ENCODE measurements at regions of chr11 and their contacts with region 1.

Region 1: GRCh38 chr11:61516675-61517572 is 8.4 kb downstream of the LRRC10B start:
- DNase-seq: peak; percentile 65
- ATAC-seq: peak; percentile 66
- H3K4me3 Mint-ChIP-seq: no peak overlapping the region
- H3K27ac Mint-ChIP-seq: no peak overlapping the region
- H3K4me1 Mint-ChIP-seq: peaks cover 4% of the 10 kb centered on the region
- H3K27me3 Mint-ChIP-seq: no peaks in the 10 kb centered on the region

Region 2: GRCh38 chr11:61429691-61430582 is 87.0 kb before region 1 on chr11 and contains the starts of genes CPSF7 and SDHAF2:
- CTCF ChIA-PET with region 1: interaction called, 17 read pairs
- POLR2A ChIA-PET with region 1: no interaction called
- DNase-seq: peak; percentile 98
- ATAC-seq: peak; percentile 93
- H3K4me3 Mint-ChIP-seq: peak within 1 kb of the TSS; percentile 99
- H3K27ac Mint-ChIP-seq: peak within 1 kb of the TSS; percentile 100
- H3K4me1 Mint-ChIP-seq: peaks cover 56% of the 10 kb centered on the region
- H3K27me3 Mint-ChIP-seq: no peaks in the 10 kb centered on the region
- total RNA-seq, gene CPSF7: 94.8 to 98.4 TPM
- total RNA-seq, gene SDHAF2: 51.6 to 54.3 TPM

Region 3: DNA sequence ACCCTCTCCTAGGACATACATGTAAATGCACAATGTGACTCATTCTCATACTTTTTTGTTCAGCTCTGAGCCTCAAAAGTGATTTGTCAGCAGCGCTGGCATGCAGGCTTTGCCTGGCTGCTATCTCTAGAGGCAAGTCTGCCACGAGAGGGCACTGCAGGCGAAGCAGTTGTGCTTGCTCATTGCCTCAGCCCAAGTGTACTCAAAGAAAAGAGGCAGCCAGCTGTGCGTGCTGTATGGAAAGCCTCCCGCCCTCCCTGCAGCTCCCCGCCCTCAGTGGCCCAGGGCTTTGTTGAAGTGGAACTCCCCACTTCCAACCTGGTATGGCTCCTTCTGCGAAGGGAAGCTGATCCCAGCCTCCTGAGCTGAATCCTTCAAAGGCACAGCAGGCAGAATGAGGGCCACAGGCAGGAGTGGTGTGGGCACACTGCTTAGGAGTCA is 70.7 kb before region 1 on chr11:
- CTCF ChIA-PET with region 1: interaction called, 79 read pairs
- POLR2A ChIA-PET with region 1: no interaction called
- DNase-seq: peak; percentile 83
- ATAC-seq: peak; percentile 93
- H3K4me3 Mint-ChIP-seq: no peak overlapping the region
- H3K27ac Mint-ChIP-seq: no peak overlapping the region
- H3K4me1 Mint-ChIP-seq: peaks cover 2% of the 10 kb centered on the region
- H3K27me3 Mint-ChIP-seq: no peaks in the 10 kb centered on the region

Region 4: GRCh38 chr11:61477727-61478148 is 39.2 kb before region 1 on chr11:
- CTCF ChIA-PET with region 1: interaction called, 115 read pairs
- POLR2A ChIA-PET with region 1: interaction called, 4 read pairs
- DNase-seq: peak; percentile 66
- ATAC-seq: peak; percentile 49
- H3K4me3 Mint-ChIP-seq: no peak overlapping the region
- H3K27ac Mint-ChIP-seq: no peak overlapping the region
- H3K4me1 Mint-ChIP-seq: peaks cover 5% of the 10 kb centered on the region
- H3K27me3 Mint-ChIP-seq: no peaks in the 10 kb centered on the region

Region 5: DNA sequence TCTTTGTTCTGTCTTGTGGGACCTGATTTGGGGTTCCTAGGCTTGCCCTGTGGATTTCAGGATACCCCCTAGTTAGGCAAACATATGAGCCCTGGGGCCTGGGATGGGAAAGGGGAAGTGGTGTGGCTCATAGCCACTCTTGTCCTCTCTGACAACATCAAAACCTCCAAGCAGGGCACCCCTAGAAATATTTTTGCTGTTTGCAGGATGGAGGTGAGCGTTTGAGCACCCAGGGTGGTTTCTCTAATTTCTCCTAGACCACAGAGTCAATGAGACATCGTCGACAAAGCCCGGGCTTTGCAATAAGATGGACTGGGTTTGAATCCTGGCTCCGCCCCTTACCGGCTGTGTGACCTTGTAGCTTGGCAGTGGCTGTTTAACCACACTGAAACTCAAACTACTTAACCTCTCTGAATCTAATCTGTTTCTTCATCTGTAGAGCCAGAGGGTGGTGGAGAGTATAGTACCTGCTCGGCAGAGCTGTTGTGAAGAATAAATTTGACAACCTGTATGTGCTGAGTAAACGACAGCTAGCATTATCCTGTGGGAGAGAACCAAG is 13.6 kb before region 1 on chr11:
- CTCF ChIA-PET with region 1: interaction called, 32 read pairs
- POLR2A ChIA-PET with region 1: no interaction called
- DNase-seq: no peak
- ATAC-seq: no peak
- H3K4me3 Mint-ChIP-seq: no peak overlapping the region
- H3K27ac Mint-ChIP-seq: no peak overlapping the region
- H3K4me1 Mint-ChIP-seq: peaks cover 10% of the 10 kb centered on the region
- H3K27me3 Mint-ChIP-seq: peaks cover 31% of the 10 kb centered on the region

Region 6: DNA sequence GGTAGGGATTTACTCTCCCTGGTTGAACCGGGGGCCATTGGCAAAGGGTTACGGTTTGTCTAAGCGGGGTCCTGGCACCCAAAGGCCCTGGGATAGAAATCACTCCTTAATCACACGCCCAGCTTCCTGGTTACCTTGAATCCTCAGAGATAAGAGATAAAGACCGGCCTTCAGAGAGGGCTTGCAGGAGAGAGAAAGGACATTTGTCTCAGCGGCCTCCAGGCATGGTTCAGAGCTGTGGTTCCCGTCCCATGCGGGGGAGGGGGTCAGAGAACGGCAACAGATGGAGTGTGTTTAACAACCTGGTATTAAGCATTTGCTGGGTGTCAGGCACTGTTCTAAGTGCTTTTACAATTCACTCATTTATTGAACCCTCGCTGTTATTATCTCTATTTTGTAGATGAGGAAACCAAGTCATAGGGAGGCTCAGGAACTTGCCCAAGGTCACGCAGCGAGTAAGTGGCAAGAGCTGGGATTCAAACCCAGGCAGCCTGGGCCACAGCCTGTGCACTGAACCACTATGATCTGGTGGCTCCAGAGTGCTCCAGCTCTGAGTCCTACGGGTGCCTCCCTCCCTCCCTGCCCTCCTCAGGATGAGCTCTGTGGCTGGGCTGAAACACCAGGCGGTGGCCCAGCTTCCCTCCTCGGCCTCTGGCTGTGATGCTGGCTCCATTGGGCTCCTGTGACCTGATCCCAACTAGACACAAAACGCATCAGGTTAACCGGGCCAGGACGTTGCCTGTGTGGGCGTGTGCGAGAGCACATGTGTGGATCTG is 10.2 kb after region 1 on chr11:
- CTCF ChIA-PET with region 1: interaction called, 19 read pairs
- POLR2A ChIA-PET with region 1: no interaction called
- DNase-seq: no peak
- ATAC-seq: no peak
- H3K4me3 Mint-ChIP-seq: no peak overlapping the region
- H3K27ac Mint-ChIP-seq: no peak overlapping the region
- H3K4me1 Mint-ChIP-seq: no peaks in the 10 kb centered on the region
- H3K27me3 Mint-ChIP-seq: peaks cover 6% of the 10 kb centered on the region

Region 7: DNA sequence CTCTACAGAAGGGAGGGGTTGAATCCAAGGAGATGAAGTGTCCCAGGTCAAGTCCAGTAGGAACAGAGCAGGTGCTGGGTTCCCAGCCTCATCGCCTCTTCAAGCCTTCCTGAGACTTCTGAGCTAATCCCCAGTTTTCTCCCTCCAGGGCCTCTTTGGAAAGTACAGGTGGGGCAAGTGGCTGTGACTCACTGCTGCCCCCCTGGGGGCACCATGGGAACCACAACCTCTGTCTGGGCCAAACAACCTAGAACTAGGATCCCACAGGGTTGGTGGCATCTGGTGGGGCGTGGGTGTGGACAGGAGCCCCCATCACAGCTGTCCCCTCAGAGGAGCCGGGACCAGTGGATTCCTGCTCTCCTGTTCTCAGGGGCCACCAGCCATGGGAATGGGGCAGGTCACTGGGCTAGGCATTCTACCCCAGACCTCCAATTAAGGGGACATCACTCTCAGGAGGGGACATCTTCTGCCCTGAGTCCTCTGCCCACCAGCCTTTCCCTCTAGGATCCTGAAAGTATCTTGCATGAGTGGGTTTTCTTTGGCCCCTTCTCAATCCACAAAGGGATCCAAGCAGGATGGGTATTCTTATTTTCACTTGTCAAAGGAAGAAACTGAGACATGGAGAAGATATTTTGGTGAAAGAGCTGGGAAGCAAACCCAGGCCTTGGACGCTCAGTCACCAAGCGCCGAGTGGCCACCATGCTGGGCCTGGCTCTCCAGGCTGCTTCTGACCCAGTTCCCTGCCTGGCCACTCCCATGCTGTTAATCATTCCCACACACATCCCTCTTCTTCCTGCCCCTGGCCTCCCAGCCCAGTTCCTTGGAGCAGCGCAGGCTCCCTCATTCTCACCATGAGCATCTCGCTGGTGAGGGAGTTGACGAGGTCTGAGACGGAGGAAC is 15.5 kb after region 1 on chr11:
- CTCF ChIA-PET with region 1: interaction called, 19 read pairs
- POLR2A ChIA-PET with region 1: no interaction called
- DNase-seq: peak; percentile 57
- ATAC-seq: peak; percentile 63
- H3K4me3 Mint-ChIP-seq: no peak overlapping the region
- H3K27ac Mint-ChIP-seq: no peak overlapping the region
- H3K4me1 Mint-ChIP-seq: no peaks in the 10 kb centered on the region
- H3K27me3 Mint-ChIP-seq: peaks cover 4% of the 10 kb centered on the region

Region 8: DNA sequence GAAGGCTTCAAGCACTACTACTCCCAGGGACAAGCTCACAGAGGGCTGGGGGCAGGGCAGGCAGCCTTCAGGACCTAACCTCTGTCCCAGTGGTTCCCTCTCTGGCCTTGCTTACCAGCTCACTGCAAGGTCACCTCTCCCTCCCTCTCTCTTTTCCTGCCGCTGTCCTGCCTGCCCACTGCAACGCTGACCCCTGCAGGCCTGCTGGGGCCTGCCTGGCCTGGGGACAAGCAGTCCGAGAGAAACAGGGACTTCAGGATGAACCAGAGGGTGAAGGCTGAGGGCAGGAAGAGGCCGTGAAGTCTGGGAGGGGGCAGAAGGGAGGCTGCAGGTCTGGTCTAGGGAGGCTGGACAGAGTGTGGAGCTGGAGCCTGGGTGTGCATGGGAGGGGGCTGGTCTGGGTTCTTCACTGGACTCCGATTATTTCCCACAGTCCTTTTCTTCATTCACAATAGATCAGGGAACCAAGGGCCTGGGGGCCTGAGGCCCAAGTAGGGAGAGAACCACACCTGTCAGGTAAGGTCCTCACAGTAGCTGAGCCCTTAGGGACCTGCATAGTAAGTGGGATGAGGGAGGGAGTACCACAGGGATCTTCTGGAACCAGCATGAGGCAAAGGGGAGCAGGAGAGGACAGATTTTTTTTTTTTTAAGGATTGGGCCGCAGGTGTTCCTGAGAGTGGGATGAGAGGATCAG is 61.0 kb after region 1 on chr11:
- CTCF ChIA-PET with region 1: no interaction called
- POLR2A ChIA-PET with region 1: no interaction called
- DNase-seq: no peak
- ATAC-seq: no peak
- H3K4me3 Mint-ChIP-seq: no peak overlapping the region
- H3K27ac Mint-ChIP-seq: no peak overlapping the region
- H3K4me1 Mint-ChIP-seq: peaks cover 5% of the 10 kb centered on the region
- H3K27me3 Mint-ChIP-seq: peaks cover 36% of the 10 kb centered on the region

Measured in activated CD8-positive, alpha-beta T cell treated with anti-CD3 and anti-CD28 coated beads, Interleukin-2, amount 10 ng/mL, durations not matched to agents 7 days and 5 days (primary cell).